Activated CD4-positive, alpha-beta T cell treated with anti-CD3 and anti-CD28 coated beads for 36 hours (primary cell): ENCODE measurements at regions of chr10 and their contacts with region 1.

Region 1: GRCh38 chr10:72337020-72337629 is 17.6 kb downstream of the DNAJB12 start:
- DNase-seq: peak; percentile 84
- ATAC-seq: peak; percentile 8
- H3K4me3 Mint-ChIP-seq: peak overlapping the region; percentile 24
- H3K27ac Mint-ChIP-seq: peak overlapping the region; percentile 95
- H3K4me1 Mint-ChIP-seq: peaks cover 63% of the 10 kb centered on the region
- H3K27me3 Mint-ChIP-seq: no peaks in the 10 kb centered on the region

Region 2: DNA sequence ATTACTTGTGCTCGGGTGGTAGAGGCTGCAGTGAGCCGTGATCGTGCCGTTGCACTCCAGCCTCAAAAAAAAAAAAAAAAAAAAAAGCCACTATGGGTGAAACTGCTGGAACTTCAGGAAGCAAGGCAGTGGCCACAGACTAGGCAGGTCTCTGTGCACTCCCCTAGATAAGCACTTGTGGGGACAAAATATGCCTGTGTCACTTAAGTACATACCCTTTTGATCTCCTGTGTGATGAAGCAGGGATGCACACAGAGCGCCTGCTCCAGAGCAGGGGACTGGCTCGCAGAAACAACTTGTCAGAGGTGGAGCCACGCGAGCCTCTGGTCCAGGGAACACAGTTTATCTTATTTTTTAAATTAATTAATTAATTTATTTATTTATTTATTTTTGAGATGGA is 443.2 kb before region 1 on chr10:
- CTCF ChIA-PET with region 1: interaction called, 4 read pairs
- POLR2A ChIA-PET with region 1: no interaction called
- intact Hi-C with region 1: loop called (anchors 1 to 5 kb)
- DNase-seq: no peak
- ATAC-seq: no peak
- H3K4me3 Mint-ChIP-seq: no peak overlapping the region
- H3K27ac Mint-ChIP-seq: no peak overlapping the region
- H3K4me1 Mint-ChIP-seq: peaks cover 6% of the 10 kb centered on the region
- H3K27me3 Mint-ChIP-seq: peaks cover 3% of the 10 kb centered on the region

Region 3: GRCh38 chr10:72048450-72049124 is 288.5 kb before region 1 on chr10:
- CTCF ChIA-PET with region 1: interaction called, 16 read pairs
- POLR2A ChIA-PET with region 1: interaction called, 4 read pairs
- intact Hi-C with region 1: loop called (anchors 1 kb)
- DNase-seq: peak; percentile 96
- ATAC-seq: peak; percentile 97
- H3K4me3 Mint-ChIP-seq: no peak overlapping the region
- H3K27ac Mint-ChIP-seq: peak overlapping the region; percentile 28
- H3K4me1 Mint-ChIP-seq: peaks cover 14% of the 10 kb centered on the region
- H3K27me3 Mint-ChIP-seq: no peaks in the 10 kb centered on the region

Region 4: GRCh38 chr10:72126184-72126871 is 210.8 kb before region 1 on chr10:
- CTCF ChIA-PET with region 1: interaction called, 34 read pairs
- POLR2A ChIA-PET with region 1: no interaction called
- intact Hi-C with region 1: loop called in 1 of 2 experiments (anchors 1 kb)
- DNase-seq: no peak
- ATAC-seq: peak; percentile 44
- H3K4me3 Mint-ChIP-seq: no peak overlapping the region
- H3K27ac Mint-ChIP-seq: no peak overlapping the region
- H3K4me1 Mint-ChIP-seq: peaks cover 39% of the 10 kb centered on the region
- H3K27me3 Mint-ChIP-seq: no peaks in the 10 kb centered on the region

Region 5: GRCh38 chr10:72223743-72224101 is 113.4 kb before region 1 on chr10:
- CTCF ChIA-PET with region 1: interaction called, 11 read pairs
- POLR2A ChIA-PET with region 1: interaction called, 6 read pairs
- intact Hi-C with region 1: loop called (anchors 1 to 2 kb)
- DNase-seq: no peak
- ATAC-seq: peak; percentile 41
- H3K4me3 Mint-ChIP-seq: peak overlapping the region; percentile 52
- H3K27ac Mint-ChIP-seq: peak overlapping the region; percentile 92
- H3K4me1 Mint-ChIP-seq: peaks cover 55% of the 10 kb centered on the region
- H3K27me3 Mint-ChIP-seq: no peaks in the 10 kb centered on the region

Region 6: GRCh38 chr10:72260588-72261322 is 76.4 kb before region 1 on chr10:
- CTCF ChIA-PET with region 1: interaction called, 13 read pairs
- POLR2A ChIA-PET with region 1: interaction called, 10 read pairs
- intact Hi-C with region 1: loop called in 1 of 2 experiments (anchors 1 kb)
- DNase-seq: peak; percentile 97
- ATAC-seq: peak; percentile 75
- H3K4me3 Mint-ChIP-seq: peak overlapping the region; percentile 78
- H3K27ac Mint-ChIP-seq: peak overlapping the region; percentile 97
- H3K4me1 Mint-ChIP-seq: peaks cover 70% of the 10 kb centered on the region
- H3K27me3 Mint-ChIP-seq: no peaks in the 10 kb centered on the region

Region 7: DNA sequence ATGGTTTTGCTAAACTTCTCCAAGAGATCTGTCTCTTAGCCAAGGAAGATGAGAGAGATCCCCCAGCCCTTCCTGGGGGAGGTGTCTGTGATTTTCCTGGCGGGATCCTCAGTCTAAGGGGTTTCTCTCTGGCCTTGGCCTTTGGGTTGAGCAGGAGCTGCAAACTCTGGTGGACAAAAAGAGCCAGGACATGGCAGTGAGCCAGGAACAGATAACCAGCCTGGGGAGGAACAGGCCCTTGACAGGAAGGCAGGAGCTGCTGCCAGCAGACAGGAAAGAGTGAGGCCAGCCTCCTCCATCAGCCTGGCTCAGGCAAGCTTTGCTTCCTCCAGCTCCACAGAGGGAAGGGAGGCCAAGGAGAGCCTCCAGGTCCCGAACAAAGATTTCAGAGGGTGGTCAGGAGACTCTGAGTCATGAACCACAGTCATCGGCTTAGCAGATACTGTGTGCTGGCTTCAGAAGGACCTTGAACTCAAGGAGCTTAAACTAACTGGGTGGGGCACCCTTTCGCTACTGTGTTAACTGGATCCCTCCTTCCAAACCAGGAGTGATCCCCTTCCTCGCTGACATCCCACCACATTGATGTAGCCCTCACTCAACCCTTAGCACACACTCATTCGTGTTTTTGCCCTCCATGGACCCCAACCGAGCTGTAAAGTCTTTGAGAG is 28.7 kb before region 1 on chr10:
- CTCF ChIA-PET with region 1: interaction called, 20 read pairs
- POLR2A ChIA-PET with region 1: interaction called, 13 read pairs
- intact Hi-C with region 1: no loop called
- DNase-seq: peak; percentile 68
- ATAC-seq: peak; percentile 26
- H3K4me3 Mint-ChIP-seq: peak overlapping the region; percentile 9
- H3K27ac Mint-ChIP-seq: peak overlapping the region; percentile 89
- H3K4me1 Mint-ChIP-seq: peaks cover 74% of the 10 kb centered on the region
- H3K27me3 Mint-ChIP-seq: no peaks in the 10 kb centered on the region

Region 8: GRCh38 chr10:72449915-72450441 is 112.9 kb after region 1 on chr10:
- CTCF ChIA-PET with region 1: no interaction called
- POLR2A ChIA-PET with region 1: no interaction called
- intact Hi-C with region 1: no loop called
- DNase-seq: no peak
- ATAC-seq: no peak
- H3K4me3 Mint-ChIP-seq: no peak overlapping the region
- H3K27ac Mint-ChIP-seq: no peak overlapping the region
- H3K4me1 Mint-ChIP-seq: no peaks in the 10 kb centered on the region
- H3K27me3 Mint-ChIP-seq: no peaks in the 10 kb centered on the region